GM12878 (cell line): ENCODE measurements at regions of chr2 and their contacts with region 1.

Region 1: GRCh38 chr2:97697252-97698235 is 15.8 kb upstream of the ZAP70 start:
- DNase-seq: peak; percentile 45
- ATAC-seq: peak; percentile 96
- H3K4me3 ChIP-seq: peak overlapping the region; percentile 25; the same call in 1 of the 2 replicates
- H3K27ac ChIP-seq: no peak overlapping the region
- H3K4me1 ChIP-seq: no peaks in the 10 kb centered on the region; the same call in 1 of the 2 replicates
- H3K27me3 ChIP-seq: no peaks in the 10 kb centered on the region
- CTCF ChIP-seq: peak; percentile 81 to 98 (median 88); a peak in 5 of 6 replicates
- EP300 ChIP-seq: no peak
- POLR2A ChIP-seq: no peak
- RAD21 ChIP-seq: peak; percentile 99

Region 2: DNA sequence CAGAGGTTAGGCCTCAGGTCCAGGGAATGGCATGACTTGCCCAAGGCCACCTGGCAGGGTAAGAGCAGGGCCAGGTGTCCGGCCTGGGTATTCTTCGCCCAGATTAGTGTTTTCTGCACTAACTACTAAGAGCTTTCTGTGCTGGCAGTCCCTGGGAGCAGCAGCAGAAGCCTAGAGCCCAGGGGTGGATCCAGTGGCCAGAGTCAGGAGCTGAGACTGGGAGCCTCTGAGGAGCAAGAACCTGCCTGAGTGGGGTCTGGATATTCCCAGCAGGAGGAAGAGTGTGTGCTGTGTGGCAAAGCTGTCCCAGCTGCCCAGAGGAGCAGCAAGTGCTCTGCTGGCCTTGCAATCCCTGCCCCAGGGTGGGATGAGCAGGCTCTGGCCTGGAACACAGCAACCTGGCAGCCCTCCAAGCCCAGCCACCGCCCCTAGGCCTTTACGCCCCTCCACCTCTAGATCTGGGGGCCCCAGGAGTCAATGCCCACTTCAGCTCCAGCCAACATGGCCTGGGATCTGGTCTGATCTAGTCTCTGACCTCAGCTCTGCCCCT is 1632.1 kb before region 1 on chr2:
- CTCF ChIA-PET with region 1: no interaction called
- POLR2A ChIA-PET with region 1: no interaction called
- RAD21 ChIA-PET with region 1: interaction called, 4 read pairs
- SMC1A ChIA-PET with region 1: no interaction called
- in situ Hi-C with region 1: loop called (anchors 10 kb)
- intact Hi-C with region 1: no loop called
- DNase-seq: no peak
- ATAC-seq: no peak
- H3K4me3 ChIP-seq: no peak overlapping the region
- H3K27ac ChIP-seq: no peak overlapping the region
- H3K4me1 ChIP-seq: no peaks in the 10 kb centered on the region
- H3K27me3 ChIP-seq: no peaks in the 10 kb centered on the region; a peak in 1 of 4 replicates
- CTCF ChIP-seq: no peak
- EP300 ChIP-seq: no peak
- POLR2A ChIP-seq: no peak
- RAD21 ChIP-seq: no peak

Region 3: GRCh38 chr2:97663965-97664635 is 33.4 kb before region 1 on chr2 and contains the start of gene ACTR1B:
- CTCF ChIA-PET with region 1: interaction called, 114 read pairs
- POLR2A ChIA-PET with region 1: interaction called, 5 read pairs
- RAD21 ChIA-PET with region 1: interaction called, 76 read pairs
- SMC1A ChIA-PET with region 1: interaction called, 81 read pairs
- in situ Hi-C with region 1: no loop called
- intact Hi-C with region 1: loop called (anchors 1 kb)
- DNase-seq: peak; percentile 92
- ATAC-seq: peak; percentile 91
- H3K4me3 ChIP-seq: peak within 1 kb of the TSS; percentile 98
- H3K27ac ChIP-seq: peak within 1 kb of the TSS; percentile 96
- H3K4me1 ChIP-seq: no peaks in the 10 kb centered on the region; the same call in 1 of the 2 replicates
- H3K27me3 ChIP-seq: no peaks in the 10 kb centered on the region
- CTCF ChIP-seq: peak; percentile 52 to 62 (median 52)
- EP300 ChIP-seq: no peak
- POLR2A ChIP-seq: peak; percentile 74
- RAD21 ChIP-seq: peak; percentile 68
- polyA plus RNA-seq, gene ACTR1B: 1.3 to 5.2 TPM

Region 4: DNA sequence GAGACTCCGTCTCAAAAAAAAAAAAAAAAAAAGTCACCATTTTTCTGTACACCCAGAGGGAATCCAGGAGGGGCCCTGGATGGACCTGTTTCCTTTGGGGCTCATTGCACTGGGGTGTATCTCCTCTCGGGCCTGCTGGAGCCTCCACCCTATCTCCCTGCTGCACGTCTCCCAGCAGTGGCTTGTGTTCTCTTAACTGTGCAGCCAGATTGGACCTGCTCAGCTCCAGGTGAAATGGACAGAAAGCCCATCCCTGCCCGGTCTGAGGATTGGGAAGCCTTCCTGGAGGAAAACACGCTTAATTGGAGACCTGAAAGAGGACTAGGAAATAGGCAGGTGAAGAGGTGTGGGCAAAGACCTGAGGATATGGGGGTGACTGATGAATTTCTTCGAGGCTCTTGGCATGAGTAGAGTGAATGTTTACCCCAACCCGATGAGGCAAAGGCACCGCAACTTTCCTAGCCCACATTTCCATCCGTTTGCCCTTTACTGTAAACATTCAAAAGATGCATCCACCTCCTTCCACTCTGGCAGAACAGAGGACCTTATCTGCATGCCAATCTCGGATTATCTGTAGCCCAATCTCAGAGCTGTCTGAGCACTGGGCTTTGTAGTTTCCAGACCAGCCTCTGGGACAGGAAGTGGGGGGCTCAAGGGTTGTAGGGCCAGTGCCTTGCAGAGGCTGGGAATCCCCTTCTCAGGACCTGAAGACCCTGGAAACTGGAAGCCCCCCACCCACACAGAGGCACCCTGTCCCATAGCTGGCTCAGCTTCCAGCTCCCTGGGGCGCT is 13.2 kb after region 1 on chr2:
- CTCF ChIA-PET with region 1: interaction called, 40 read pairs
- POLR2A ChIA-PET with region 1: interaction called, 3 read pairs
- RAD21 ChIA-PET with region 1: interaction called, 15 read pairs
- SMC1A ChIA-PET with region 1: interaction called, 15 read pairs
- in situ Hi-C with region 1: no loop called
- intact Hi-C with region 1: no loop called
- DNase-seq: no peak
- ATAC-seq: no peak
- H3K4me3 ChIP-seq: no peak overlapping the region
- H3K27ac ChIP-seq: no peak overlapping the region
- H3K4me1 ChIP-seq: 0 out of 2 replicates have a peak, but pooled peaks cover 3% of the 10 kb centered on the region
- H3K27me3 ChIP-seq: no peaks in the 10 kb centered on the region
- CTCF ChIP-seq: no peak
- EP300 ChIP-seq: no peak
- POLR2A ChIP-seq: no peak
- RAD21 ChIP-seq: no peak

Region 5: GRCh38 chr2:97740590-97741182 is 43.1 kb after region 1 on chr2:
- CTCF ChIA-PET with region 1: interaction called, 10 read pairs
- POLR2A ChIA-PET with region 1: no interaction called
- RAD21 ChIA-PET with region 1: no interaction called
- SMC1A ChIA-PET with region 1: interaction called, 7 read pairs
- in situ Hi-C with region 1: no loop called
- intact Hi-C with region 1: no loop called
- DNase-seq: no peak
- ATAC-seq: peak; percentile 78
- H3K4me3 ChIP-seq: no peak overlapping the region
- H3K27ac ChIP-seq: no peak overlapping the region
- H3K4me1 ChIP-seq: peaks cover 7% of the 10 kb centered on the region
- H3K27me3 ChIP-seq: no peaks in the 10 kb centered on the region
- CTCF ChIP-seq: peak; percentile 84 to 92 (median 87)
- EP300 ChIP-seq: no peak
- POLR2A ChIP-seq: no peak
- RAD21 ChIP-seq: peak; percentile 59

Region 6: GRCh38 chr2:97900806-97901205 is 203.3 kb after region 1 on chr2:
- CTCF ChIA-PET with region 1: no interaction called
- POLR2A ChIA-PET with region 1: no interaction called
- RAD21 ChIA-PET with region 1: no interaction called
- SMC1A ChIA-PET with region 1: no interaction called
- in situ Hi-C with region 1: no loop called
- intact Hi-C with region 1: no loop called
- DNase-seq: no peak
- ATAC-seq: no peak
- H3K4me3 ChIP-seq: no peak overlapping the region
- H3K27ac ChIP-seq: no peak overlapping the region
- H3K4me1 ChIP-seq: no peaks in the 10 kb centered on the region
- H3K27me3 ChIP-seq: no peaks in the 10 kb centered on the region
- CTCF ChIP-seq: no peak
- EP300 ChIP-seq: no peak
- POLR2A ChIP-seq: no peak
- RAD21 ChIP-seq: no peak

Region 7: GRCh38 chr2:98188351-98189049 is 491.0 kb after region 1 on chr2:
- CTCF ChIA-PET with region 1: interaction called, 16 read pairs
- POLR2A ChIA-PET with region 1: no interaction called
- RAD21 ChIA-PET with region 1: interaction called, 4 read pairs
- SMC1A ChIA-PET with region 1: interaction called, 16 read pairs
- in situ Hi-C with region 1: no loop called
- intact Hi-C with region 1: loop called (anchors 10 kb)
- DNase-seq: no peak
- ATAC-seq: no peak
- H3K4me3 ChIP-seq: no peak overlapping the region
- H3K27ac ChIP-seq: no peak overlapping the region
- H3K4me1 ChIP-seq: no peaks in the 10 kb centered on the region; the same call in 1 of the 2 replicates
- H3K27me3 ChIP-seq: no peaks in the 10 kb centered on the region; a peak in 1 of 4 replicates
- CTCF ChIP-seq: peak in 2 of 3 experiments; percentile 21 to 34; a peak in 3 of 6 replicates
- EP300 ChIP-seq: no peak
- POLR2A ChIP-seq: no peak
- RAD21 ChIP-seq: peak; percentile 51

Region 8: GRCh38 chr2:98385050-98385699 is 687.6 kb after region 1 on chr2:
- CTCF ChIA-PET with region 1: interaction called, 43 read pairs
- POLR2A ChIA-PET with region 1: no interaction called
- RAD21 ChIA-PET with region 1: interaction called, 33 read pairs
- SMC1A ChIA-PET with region 1: interaction called, 34 read pairs
- in situ Hi-C with region 1: loop called (anchors 5 kb)
- intact Hi-C with region 1: loop called (anchors 1 kb)
- DNase-seq: peak; percentile 11
- ATAC-seq: peak; percentile 99
- H3K4me3 ChIP-seq: no peak overlapping the region
- H3K27ac ChIP-seq: no peak overlapping the region
- H3K4me1 ChIP-seq: no peaks in the 10 kb centered on the region
- H3K27me3 ChIP-seq: peaks cover 0 to 2% of the 10 kb centered on the region in 2 experiments; a peak in 3 of 4 replicates
- CTCF ChIP-seq: peak; percentile 98 to 100 (median 99); a peak in 5 of 6 replicates
- EP300 ChIP-seq: no peak
- POLR2A ChIP-seq: no peak
- RAD21 ChIP-seq: peak; percentile 99